ENCODE measurements at regions of chr9 and their contacts with region 1.

Region 1: GRCh38 chr9:114397848-114398605 is 10.2 kb upstream of the AKNA start:
- H3K4me3 Mint-ChIP-seq: peak overlapping the region; percentile 93
- H3K27ac Mint-ChIP-seq: peak overlapping the region; percentile 98
- H3K4me1 Mint-ChIP-seq: peaks cover 44% of the 10 kb centered on the region
- H3K27me3 Mint-ChIP-seq: no peaks in the 10 kb centered on the region

Region 2: DNA sequence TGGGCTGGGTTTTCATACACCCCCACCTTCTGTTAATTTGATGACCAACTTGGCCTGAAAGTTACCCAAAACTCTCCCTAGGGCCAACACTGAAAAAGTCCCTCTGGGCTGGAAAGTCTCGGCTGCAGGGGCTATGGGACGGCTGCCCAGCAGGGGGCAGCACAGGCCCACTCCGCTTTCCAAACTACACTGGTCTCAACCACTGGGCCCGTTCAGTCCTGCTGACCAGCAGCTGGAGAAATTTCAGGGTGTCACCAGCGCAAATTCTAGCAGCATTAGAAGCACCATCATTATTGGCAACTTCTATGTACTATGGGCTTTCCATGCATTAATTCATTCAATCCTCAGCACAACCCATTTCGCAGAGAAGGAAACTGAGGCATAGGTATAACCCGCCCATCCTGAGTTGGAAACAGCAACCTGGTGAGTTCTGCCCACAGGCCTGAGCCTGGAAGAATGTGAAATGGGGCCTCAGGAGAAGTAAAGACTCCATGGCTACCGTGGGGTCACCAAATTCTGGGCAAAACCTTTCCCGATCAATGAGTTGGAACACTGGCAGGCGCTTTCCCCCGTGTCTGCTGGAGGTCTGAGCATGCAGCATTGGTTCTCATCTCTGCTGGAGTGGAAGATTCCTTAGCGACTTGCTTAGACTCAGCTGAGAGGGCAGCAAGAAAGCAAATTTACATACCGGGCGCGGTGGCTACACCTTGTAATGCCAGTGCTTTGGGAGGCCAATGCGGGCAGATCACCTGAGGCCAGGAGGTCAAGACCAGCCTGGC is 58.7 kb before region 1 on chr9:
- intact Hi-C with region 1: loop called (anchors 5 kb)
- H3K4me3 Mint-ChIP-seq: no peak overlapping the region
- H3K27ac Mint-ChIP-seq: peak overlapping the region; percentile 73
- H3K4me1 Mint-ChIP-seq: peaks cover 36% of the 10 kb centered on the region
- H3K27me3 Mint-ChIP-seq: no peaks in the 10 kb centered on the region

Region 3: GRCh38 chr9:114372921-114373448 is 25.0 kb before region 1 on chr9:
- intact Hi-C with region 1: loop called (anchors 1 kb)
- H3K4me3 Mint-ChIP-seq: peak overlapping the region; percentile 18
- H3K27ac Mint-ChIP-seq: peak overlapping the region; percentile 37
- H3K4me1 Mint-ChIP-seq: peaks cover 82% of the 10 kb centered on the region
- H3K27me3 Mint-ChIP-seq: no peaks in the 10 kb centered on the region

Region 4: GRCh38 chr9:114385412-114386181 is 12.4 kb before region 1 on chr9:
- intact Hi-C with region 1: loop called (anchors 1 kb)
- H3K4me3 Mint-ChIP-seq: peak overlapping the region; percentile 96
- H3K27ac Mint-ChIP-seq: peak overlapping the region; percentile 95
- H3K4me1 Mint-ChIP-seq: peaks cover 84% of the 10 kb centered on the region
- H3K27me3 Mint-ChIP-seq: no peaks in the 10 kb centered on the region